ENCODE measurements at regions of chr3 and their contacts with region 1.

Region 1: DNA sequence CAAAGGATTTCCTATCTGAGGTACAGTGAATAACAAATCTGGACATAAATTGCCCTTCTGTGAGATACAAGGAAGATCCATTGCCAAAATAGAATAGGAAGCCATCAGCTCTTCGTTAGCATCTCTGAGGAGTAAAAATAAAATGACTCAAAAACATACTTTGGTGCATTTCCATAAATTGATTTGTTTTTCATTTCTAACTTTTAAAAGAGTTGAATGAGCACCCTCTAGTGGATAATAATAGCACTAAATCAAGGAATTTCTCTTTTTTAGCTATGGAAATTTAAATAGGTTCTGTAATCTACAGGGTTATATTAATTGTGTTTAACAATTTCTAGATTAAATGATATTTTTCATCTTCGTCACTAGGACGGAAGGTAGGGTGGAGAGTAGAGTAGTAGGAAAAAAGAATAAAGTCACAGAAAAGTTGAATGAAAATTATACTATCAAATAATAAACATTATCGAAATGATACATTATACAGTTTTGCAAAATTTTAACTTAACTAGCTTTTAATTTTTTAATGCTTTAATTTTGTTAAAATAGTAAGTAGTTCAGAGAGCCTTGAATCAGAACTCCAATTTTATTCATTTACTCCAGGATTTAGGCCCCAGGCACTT is 6.4 kb downstream of the NSUN3 start:
- DNase-seq: no peak
- ATAC-seq: no peak
- H3K4me3 Mint-ChIP-seq: no peak overlapping the region
- H3K27ac Mint-ChIP-seq: no peak overlapping the region
- H3K4me1 Mint-ChIP-seq: peaks cover 48% of the 10 kb centered on the region
- H3K27me3 Mint-ChIP-seq: no peaks in the 10 kb centered on the region

Region 2: DNA sequence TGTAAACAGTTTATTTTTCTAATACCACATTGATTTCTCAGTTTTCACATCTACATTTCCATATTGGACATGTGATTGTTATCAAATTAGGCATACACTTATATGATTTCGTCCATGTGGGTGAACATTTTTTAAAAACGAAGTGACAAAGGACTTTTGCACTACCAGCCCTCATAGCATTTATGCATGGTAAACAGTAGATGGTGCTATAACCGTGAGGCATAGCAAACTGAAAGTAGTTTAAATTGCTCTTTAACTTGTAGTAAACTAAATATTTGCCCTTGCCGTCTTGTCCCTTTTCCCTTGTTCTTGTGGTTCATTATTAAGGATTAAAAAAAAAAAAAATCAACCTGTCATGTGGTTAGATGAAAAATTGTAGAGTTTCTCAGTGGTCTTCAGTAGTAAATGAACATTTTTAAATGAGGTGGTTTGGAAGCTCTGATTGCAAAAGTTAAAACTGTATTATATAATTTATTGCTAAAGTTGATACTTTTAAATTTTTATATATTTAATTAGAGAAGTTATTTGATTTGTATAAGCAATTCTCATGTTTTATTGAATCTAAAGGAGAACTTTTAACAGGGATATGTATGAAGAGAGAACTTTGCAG is 64.9 kb before region 1 on chr3:
- CTCF ChIA-PET with region 1: interaction called, 31 read pairs
- POLR2A ChIA-PET with region 1: no interaction called
- DNase-seq: peak; percentile 24
- ATAC-seq: peak; percentile 79
- H3K4me3 Mint-ChIP-seq: peak overlapping the region; percentile 60
- H3K27ac Mint-ChIP-seq: peak overlapping the region; percentile 67
- H3K4me1 Mint-ChIP-seq: peaks cover 1% of the 10 kb centered on the region
- H3K27me3 Mint-ChIP-seq: no peaks in the 10 kb centered on the region

Region 3: DNA sequence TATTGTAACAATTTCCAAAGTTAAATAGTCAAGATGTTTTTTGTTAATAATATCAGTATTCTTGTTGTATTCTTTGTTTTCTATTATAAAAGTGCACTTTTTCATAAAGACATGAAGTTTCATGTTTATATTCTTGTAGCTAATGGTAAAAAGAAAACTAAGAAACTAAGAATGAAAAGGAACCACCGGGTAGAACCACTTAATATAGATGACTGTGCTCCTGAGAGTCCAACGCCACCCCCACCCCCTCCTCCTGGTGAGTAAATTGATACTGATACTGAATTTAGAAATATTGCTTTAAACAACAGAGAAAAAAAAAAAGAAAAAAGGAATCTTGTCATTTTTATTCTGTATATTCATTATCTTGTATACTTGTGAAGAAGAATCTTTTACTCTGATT is 20.0 kb before region 1 on chr3:
- CTCF ChIA-PET with region 1: no interaction called
- POLR2A ChIA-PET with region 1: no interaction called
- DNase-seq: no peak
- ATAC-seq: no peak
- H3K4me3 Mint-ChIP-seq: no peak overlapping the region
- H3K27ac Mint-ChIP-seq: no peak overlapping the region
- H3K4me1 Mint-ChIP-seq: no peaks in the 10 kb centered on the region
- H3K27me3 Mint-ChIP-seq: no peaks in the 10 kb centered on the region

Region 4: GRCh38 chr3:94083261-94083660 is 14.0 kb after region 1 on chr3:
- CTCF ChIA-PET with region 1: interaction called, 17 read pairs
- POLR2A ChIA-PET with region 1: interaction called, 3 read pairs
- DNase-seq: peak; percentile 27
- ATAC-seq: peak; percentile 63
- H3K4me3 Mint-ChIP-seq: peak overlapping the region; percentile 18
- H3K27ac Mint-ChIP-seq: peak overlapping the region; percentile 57
- H3K4me1 Mint-ChIP-seq: peaks cover 46% of the 10 kb centered on the region
- H3K27me3 Mint-ChIP-seq: no peaks in the 10 kb centered on the region

Region 5: DNA sequence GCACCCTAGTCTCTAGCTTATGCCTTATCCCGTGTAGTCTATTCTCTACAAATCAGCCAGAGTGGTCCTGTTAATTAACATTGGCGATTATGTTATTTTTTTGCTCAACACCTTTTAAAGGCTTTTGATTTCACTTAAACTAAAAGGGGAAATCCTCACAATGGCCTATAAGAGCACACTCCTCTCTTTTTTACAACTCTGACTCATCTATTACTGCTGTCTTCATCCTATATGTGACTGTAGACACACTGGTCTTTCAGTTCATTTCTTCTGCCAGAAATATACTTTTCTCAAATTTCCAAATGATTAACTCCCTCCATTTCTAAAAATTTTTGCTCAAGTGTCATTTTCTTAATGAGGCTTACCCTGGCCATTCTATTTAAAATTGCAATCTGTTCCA is 137.0 kb after region 1 on chr3:
- CTCF ChIA-PET with region 1: no interaction called
- POLR2A ChIA-PET with region 1: no interaction called
- DNase-seq: no peak
- ATAC-seq: no peak
- H3K4me3 Mint-ChIP-seq: no peak overlapping the region
- H3K27ac Mint-ChIP-seq: no peak overlapping the region
- H3K4me1 Mint-ChIP-seq: no peaks in the 10 kb centered on the region
- H3K27me3 Mint-ChIP-seq: no peaks in the 10 kb centered on the region